Dendritic cell treated with granulocyte-macrophage colony-stimulating factor and Interleukin-4, amounts not matched to agents 40 ng/mL and 50 ng/mL, for 4 days (primary cell): ENCODE measurements at regions of chr14 and their contacts with region 1.

Region 1: DNA sequence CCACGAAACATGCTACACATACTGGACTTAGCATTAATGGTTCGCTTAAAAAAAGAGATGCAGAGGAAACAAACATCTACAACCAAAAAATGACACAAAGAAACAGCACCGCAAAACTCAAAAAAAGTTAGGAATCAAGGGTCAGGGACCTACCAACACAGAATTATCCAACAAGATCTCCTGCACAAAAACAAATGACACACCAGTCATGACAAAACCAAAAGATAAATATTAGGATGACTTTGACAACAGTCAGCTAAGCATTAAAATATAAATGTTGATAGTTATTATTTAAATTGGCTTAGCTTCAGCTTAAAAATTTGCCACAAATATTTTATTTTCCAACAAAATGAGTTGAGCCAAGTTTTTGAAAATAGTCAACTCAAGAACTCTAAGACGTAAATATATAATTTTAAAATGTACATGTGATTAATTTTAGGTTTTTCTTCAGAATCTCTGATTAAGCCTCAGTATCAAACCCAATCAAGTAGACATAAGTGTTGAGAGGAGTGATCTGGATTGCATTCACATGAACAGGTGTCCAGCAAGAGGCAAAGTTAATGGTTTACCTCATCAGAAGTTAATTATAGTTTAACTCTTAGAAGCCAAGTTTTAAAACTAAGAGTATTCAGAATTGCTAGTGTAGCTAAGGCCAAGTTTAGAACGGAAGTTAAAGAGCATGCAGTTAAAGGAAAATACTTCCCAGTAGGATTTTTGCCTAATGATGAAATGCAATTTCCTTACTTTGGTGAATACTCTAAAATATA is 79.9 kb downstream of the HEATR5A start:
- H3K4me3 Mint-ChIP-seq: no peak overlapping the region
- H3K27ac Mint-ChIP-seq: no peak overlapping the region
- H3K4me1 Mint-ChIP-seq: no peaks in the 10 kb centered on the region
- H3K27me3 Mint-ChIP-seq: no peaks in the 10 kb centered on the region

Region 2: GRCh38 chr14:30935445-30935844 is 405.0 kb before region 1 on chr14:
- intact Hi-C with region 1: loop called (anchors 10 kb)
- H3K4me3 Mint-ChIP-seq: no peak overlapping the region
- H3K27ac Mint-ChIP-seq: no peak overlapping the region
- H3K4me1 Mint-ChIP-seq: no peaks in the 10 kb centered on the region
- H3K27me3 Mint-ChIP-seq: no peaks in the 10 kb centered on the region

Region 3: DNA sequence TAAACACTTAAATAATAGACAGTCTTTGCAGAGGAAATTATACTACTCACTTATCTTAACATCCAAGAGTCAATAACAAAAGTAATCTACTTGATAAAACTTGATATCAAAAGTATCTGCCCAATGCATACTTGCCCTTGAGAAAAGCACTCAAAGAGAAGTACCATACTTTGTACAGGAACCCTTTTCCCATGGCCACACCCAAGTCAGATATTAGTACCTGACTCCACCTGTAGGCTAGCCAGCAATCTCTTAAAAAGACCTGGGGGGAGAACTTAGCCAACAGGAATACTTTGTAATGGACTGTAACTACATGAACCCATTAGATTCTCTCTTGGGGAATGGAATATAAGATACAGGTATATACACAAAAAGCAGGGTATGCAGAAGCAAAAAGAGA is 33.3 kb before region 1 on chr14:
- intact Hi-C with region 1: no loop called
- H3K4me3 Mint-ChIP-seq: no peak overlapping the region
- H3K27ac Mint-ChIP-seq: no peak overlapping the region
- H3K4me1 Mint-ChIP-seq: no peaks in the 10 kb centered on the region
- H3K27me3 Mint-ChIP-seq: no peaks in the 10 kb centered on the region

Region 4: DNA sequence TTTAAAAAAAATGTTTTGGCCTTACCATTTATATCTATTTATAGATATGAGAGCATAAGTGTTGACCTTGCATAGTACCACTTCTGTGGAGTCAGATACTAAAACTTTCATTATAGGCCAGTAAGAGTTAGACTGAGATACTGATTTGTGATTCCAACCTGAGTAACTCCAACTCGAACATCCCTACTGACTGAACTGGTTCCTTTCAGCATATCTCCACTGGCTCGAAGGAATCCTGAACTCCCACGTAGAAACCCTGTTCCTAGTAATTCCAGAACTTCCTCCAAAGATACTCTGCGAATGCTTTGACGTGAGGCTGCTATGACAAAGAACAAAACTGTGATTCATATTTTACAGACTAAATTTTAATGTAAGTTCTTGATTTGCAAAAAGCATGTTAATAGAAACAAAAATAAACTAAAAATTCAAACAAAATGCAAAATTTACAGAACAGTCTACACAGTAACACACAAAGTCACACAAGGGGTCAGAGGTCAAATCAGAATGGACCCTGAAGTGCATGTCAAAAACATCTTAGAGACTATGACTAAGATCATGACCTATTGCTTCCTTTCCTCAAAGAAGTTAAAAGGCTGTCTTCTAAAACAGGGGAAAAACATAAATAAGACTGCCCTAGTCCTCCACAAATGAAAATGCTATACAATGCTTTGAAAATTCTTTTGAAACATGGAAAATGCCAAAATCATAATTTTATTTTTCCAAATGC is 48.4 kb after region 1 on chr14:
- intact Hi-C with region 1: no loop called
- H3K4me3 Mint-ChIP-seq: no peak overlapping the region
- H3K27ac Mint-ChIP-seq: no peak overlapping the region
- H3K4me1 Mint-ChIP-seq: peaks cover 8% of the 10 kb centered on the region
- H3K27me3 Mint-ChIP-seq: no peaks in the 10 kb centered on the region